Mammary epithelial cell (primary cell): ENCODE measurements at regions of chr3 and their contacts with region 1.

Region 1: DNA sequence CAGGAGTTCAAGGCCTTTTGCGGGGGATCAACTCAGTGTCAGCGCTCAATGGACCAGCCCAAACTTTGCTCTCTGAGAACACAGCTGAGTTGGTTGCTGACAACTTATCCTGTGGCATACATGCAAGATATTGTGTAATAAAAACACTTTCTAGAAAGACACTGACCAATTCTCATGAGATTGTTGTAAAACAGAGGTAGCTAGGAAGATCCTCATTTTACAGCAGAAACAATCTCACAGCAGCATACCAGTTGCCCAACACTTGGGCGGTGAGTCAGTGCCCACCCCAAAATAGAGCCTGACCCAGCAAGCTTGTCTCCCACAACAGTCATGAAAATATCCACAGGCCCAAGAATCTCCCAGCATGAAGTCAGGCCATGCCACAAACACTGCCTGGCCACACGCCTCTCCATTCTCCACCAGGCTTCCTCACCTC is 18.2 kb downstream of the KLHL6 start:
- DNase-seq: peak; percentile 93
- H3K4me3 ChIP-seq: no peak overlapping the region
- H3K27ac ChIP-seq: peak overlapping the region; percentile 17
- H3K4me1 ChIP-seq: peaks cover 27% of the 10 kb centered on the region
- H3K27me3 ChIP-seq: no peaks in the 10 kb centered on the region
- CTCF ChIP-seq: no peak

Region 2: GRCh38 chr3:183490670-183491069 is 46.6 kb before region 1 on chr3:
- CTCF ChIA-PET with region 1: no interaction called
- dilution Hi-C with region 1: loop called (anchors 5 kb)
- in situ Hi-C with region 1: no loop called
- intact Hi-C with region 1: no loop called
- DNase-seq: peak; percentile 83
- H3K4me3 ChIP-seq: no peak overlapping the region
- H3K27ac ChIP-seq: no peak overlapping the region
- H3K4me1 ChIP-seq: peaks cover 23% of the 10 kb centered on the region
- H3K27me3 ChIP-seq: no peaks in the 10 kb centered on the region
- CTCF ChIP-seq: no peak

Region 3: DNA sequence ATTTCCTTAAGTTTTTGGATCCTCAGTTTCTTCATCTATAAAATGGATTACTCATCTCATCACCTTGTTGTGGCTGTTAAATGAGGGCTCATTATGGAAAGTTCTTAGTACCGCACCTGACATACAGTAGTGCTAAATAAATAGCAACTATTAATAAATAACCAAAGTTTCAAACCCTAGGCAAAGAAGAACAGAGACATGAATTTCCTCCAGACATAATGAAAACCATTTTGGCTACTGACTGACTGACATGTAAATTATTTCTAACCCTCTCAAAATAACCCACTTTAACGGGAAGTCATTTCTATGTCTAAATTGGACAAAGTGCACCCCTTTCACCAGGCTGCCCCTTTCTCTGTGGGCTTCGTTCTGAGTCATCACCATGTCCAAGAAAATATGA is 35.6 kb after region 1 on chr3:
- CTCF ChIA-PET with region 1: no interaction called
- dilution Hi-C with region 1: loop called (anchors 5 kb)
- in situ Hi-C with region 1: no loop called
- intact Hi-C with region 1: no loop called
- DNase-seq: no peak
- H3K4me3 ChIP-seq: no peak overlapping the region
- H3K27ac ChIP-seq: no peak overlapping the region
- H3K4me1 ChIP-seq: no peaks in the 10 kb centered on the region
- H3K27me3 ChIP-seq: no peaks in the 10 kb centered on the region
- CTCF ChIP-seq: no peak